Mammary epithelial cell (primary cell): ENCODE measurements at regions of chr3 and their contacts with region 1.

Region 1: DNA sequence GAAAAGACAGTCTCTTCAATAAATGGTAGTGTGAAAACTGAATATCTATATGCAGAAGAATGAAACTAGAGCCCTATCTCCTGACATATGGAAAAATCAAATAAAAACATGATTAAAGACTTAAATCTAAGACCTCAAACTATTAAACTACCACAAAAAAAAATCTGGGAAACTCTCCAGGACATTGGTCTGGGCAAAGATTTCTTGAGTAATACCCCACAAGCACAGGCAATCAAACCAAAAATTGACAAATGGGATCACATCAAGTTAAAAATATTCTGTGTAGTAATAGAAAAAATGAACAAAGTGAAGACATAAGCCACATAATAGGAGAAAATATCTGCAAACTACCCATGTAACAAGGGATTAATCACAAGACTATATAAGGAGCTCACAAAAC is 286.4 kb downstream of the TBC1D5 start:
- DNase-seq: no peak
- H3K4me3 ChIP-seq: no peak overlapping the region
- H3K27ac ChIP-seq: no peak overlapping the region
- H3K4me1 ChIP-seq: no peaks in the 10 kb centered on the region
- H3K27me3 ChIP-seq: no peaks in the 10 kb centered on the region
- CTCF ChIP-seq: no peak

Region 2: GRCh38 chr3:17442332-17443049 is 13.6 kb before region 1 on chr3:
- CTCF ChIA-PET with region 1: interaction called, 16 read pairs
- dilution Hi-C with region 1: no loop called
- in situ Hi-C with region 1: no loop called
- intact Hi-C with region 1: no loop called
- DNase-seq: peak; percentile 5
- H3K4me3 ChIP-seq: no peak overlapping the region
- H3K27ac ChIP-seq: no peak overlapping the region
- H3K4me1 ChIP-seq: no peaks in the 10 kb centered on the region
- H3K27me3 ChIP-seq: no peaks in the 10 kb centered on the region
- CTCF ChIP-seq: no peak

Region 3: GRCh38 chr3:17500618-17501017 is 44.6 kb after region 1 on chr3:
- CTCF ChIA-PET with region 1: no interaction called
- dilution Hi-C with region 1: no loop called
- in situ Hi-C with region 1: no loop called
- intact Hi-C with region 1: no loop called
- DNase-seq: peak; percentile 31
- H3K4me3 ChIP-seq: no peak overlapping the region
- H3K27ac ChIP-seq: no peak overlapping the region
- H3K4me1 ChIP-seq: peaks cover 7% of the 10 kb centered on the region
- H3K27me3 ChIP-seq: no peaks in the 10 kb centered on the region
- CTCF ChIP-seq: no peak